ENCODE measurements at regions of chr6 and their contacts with region 1.

Region 1: GRCh38 chr6:4021133-4021853 is 57.6 kb downstream of the FAM217A start:
- DNase-seq: peak; percentile 94
- ATAC-seq: peak; percentile 71
- H3K4me3 Mint-ChIP-seq: peak overlapping the region; percentile 85
- H3K27ac Mint-ChIP-seq: peak overlapping the region; percentile 97
- H3K4me1 Mint-ChIP-seq: peaks cover 56% of the 10 kb centered on the region
- H3K27me3 Mint-ChIP-seq: no peaks in the 10 kb centered on the region

Region 2: DNA sequence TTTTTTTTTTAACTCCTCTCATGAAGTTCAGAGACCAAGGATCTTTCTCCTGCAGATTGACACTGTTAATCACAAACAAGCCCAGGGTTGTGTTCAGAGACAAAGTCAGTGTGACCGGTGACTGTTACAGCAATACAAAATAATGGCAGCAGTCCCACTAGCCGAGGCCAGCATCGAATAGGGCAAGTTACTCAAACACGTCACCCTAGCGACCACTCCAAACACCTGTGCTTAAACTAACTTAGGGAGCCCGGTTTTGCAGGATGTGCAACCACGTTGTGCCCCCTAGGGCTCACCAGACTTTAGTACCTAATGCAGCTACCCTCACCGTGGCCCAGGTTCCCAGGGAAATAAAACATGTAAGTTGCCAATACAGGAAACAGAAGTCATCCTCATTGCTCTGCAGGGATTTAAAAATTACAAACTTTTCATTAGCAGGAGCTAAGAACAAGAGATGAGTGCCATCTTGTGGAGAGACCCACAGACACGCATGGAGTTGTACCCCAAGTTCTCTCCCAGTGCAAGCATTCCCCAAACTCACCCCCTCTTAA is 134.1 kb before region 1 on chr6:
- CTCF ChIA-PET with region 1: no interaction called
- DNase-seq: no peak
- ATAC-seq: no peak
- H3K4me3 Mint-ChIP-seq: no peak overlapping the region
- H3K27ac Mint-ChIP-seq: no peak overlapping the region
- H3K4me1 Mint-ChIP-seq: no peaks in the 10 kb centered on the region
- H3K27me3 Mint-ChIP-seq: peaks cover 13% of the 10 kb centered on the region

Region 3: DNA sequence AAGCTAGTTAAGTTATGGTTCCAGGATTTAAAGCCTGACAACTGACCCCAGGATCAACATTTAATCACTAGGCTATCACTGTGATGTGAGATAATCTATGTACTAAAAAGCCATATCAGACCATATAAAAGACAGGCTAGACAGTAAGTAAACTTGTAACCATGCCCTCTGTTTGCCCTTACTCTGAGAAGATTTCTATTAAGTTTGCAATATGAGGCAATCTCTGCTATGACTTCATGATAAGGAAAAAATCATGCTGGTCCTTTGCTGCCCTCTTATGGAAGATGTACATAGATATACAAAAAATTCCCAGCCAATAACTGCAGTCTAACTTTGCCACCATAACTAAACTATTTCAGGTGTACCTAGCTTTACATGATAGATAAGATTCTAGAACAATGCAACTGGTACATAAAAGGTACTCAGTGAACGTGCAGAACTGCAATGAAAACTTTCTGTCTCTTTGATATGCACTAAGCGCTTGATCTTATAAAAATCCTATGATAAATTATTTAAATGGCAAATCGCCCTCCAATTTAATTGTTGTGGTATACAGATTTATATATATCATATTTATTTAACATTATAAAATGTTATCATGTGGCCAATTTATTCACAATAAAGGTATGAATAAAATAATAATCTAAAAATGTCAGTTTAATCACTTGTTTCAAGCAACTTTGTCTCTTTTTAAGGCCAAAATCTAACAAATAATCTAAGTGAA is 12.8 kb before region 1 on chr6:
- CTCF ChIA-PET with region 1: interaction called, 23 read pairs
- DNase-seq: no peak
- ATAC-seq: peak; percentile 43
- H3K4me3 Mint-ChIP-seq: no peak overlapping the region
- H3K27ac Mint-ChIP-seq: no peak overlapping the region
- H3K4me1 Mint-ChIP-seq: peaks cover 43% of the 10 kb centered on the region
- H3K27me3 Mint-ChIP-seq: no peaks in the 10 kb centered on the region

Region 4: DNA sequence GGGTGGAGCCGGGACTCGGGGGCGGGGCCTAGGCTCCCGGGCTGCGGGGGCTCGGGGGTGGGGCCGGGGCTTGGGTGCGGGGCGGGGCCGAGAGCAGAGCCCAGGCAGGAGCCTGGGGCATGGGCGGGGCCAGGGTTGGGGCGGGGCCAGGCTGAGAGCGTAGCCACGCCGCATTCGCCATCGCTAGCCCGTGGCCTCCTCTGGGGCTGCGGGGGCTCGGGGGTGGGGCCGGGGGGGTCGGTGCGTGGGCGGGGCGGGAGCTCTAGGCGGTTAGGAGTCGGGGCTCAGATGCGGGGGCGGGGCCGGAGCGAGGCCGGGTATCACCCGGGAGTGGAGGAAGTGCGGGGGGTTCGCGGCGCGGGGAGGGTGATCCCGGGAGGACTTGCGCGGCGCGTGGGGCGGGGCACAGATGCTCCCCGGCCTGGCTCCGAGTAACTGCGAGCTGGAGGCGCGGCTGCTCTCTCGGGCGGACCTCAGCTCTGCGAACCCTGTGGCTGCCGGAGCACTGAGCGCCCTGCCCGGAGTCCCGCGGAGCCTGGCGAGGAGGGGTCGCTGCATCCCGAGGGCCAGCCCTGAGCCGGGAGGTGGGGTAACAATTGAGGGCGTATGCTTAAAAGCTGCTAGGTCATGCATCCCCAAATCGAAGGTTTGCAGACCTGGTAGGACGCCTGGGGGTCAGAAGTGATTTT is 114.5 kb after region 1 on chr6:
- CTCF ChIA-PET with region 1: interaction called, 10 read pairs
- DNase-seq: peak; percentile 97
- ATAC-seq: peak; percentile 90
- H3K4me3 Mint-ChIP-seq: peak overlapping the region; percentile 80
- H3K27ac Mint-ChIP-seq: peak overlapping the region; percentile 84
- H3K4me1 Mint-ChIP-seq: peaks cover 38% of the 10 kb centered on the region
- H3K27me3 Mint-ChIP-seq: no peaks in the 10 kb centered on the region

Measured in activated CD8-positive, alpha-beta memory T cell treated with anti-CD3 and anti-CD28 coated beads, Interleukin-2, amount 10 ng/mL, durations not matched to agents 7 days and 5 days (primary cell).